PC-9 (cell line): ENCODE measurements at regions of chr6 and their contacts with region 1.

Region 1: GRCh38 chr6:123802697-123803496 is 768 bp upstream of the NKAIN2 start:
- DNase-seq: peak; percentile 75 to 85
- H3K4me3 ChIP-seq: peak overlapping the region; percentile 57
- H3K27ac ChIP-seq: no peak overlapping the region
- H3K4me1 ChIP-seq: 0 out of 2 replicates have a peak, but pooled peaks cover 11% of the 10 kb centered on the region
- H3K27me3 ChIP-seq: peaks cover 24% of the 10 kb centered on the region
- CTCF ChIP-seq: peak; percentile 96

Region 2: GRCh38 chr6:123415844-123416468 is 386.9 kb before region 1 on chr6:
- CTCF ChIA-PET with region 1: no interaction called
- POLR2A ChIA-PET with region 1: no interaction called
- intact Hi-C with region 1: loop called (anchors 10 kb)
- DNase-seq: peak; percentile 44 to 61
- H3K4me3 ChIP-seq: no peak overlapping the region
- H3K27ac ChIP-seq: no peak overlapping the region
- H3K4me1 ChIP-seq: no peaks in the 10 kb centered on the region
- H3K27me3 ChIP-seq: no peaks in the 10 kb centered on the region
- CTCF ChIP-seq: peak; percentile 92

Region 3: GRCh38 chr6:124310139-124310538 is 507.2 kb after region 1 on chr6:
- CTCF ChIA-PET with region 1: no interaction called
- POLR2A ChIA-PET with region 1: no interaction called
- intact Hi-C with region 1: no loop called
- DNase-seq: no peak
- H3K4me3 ChIP-seq: no peak overlapping the region
- H3K27ac ChIP-seq: no peak overlapping the region
- H3K4me1 ChIP-seq: no peaks in the 10 kb centered on the region
- H3K27me3 ChIP-seq: no peaks in the 10 kb centered on the region
- CTCF ChIP-seq: no peak

Region 4: DNA sequence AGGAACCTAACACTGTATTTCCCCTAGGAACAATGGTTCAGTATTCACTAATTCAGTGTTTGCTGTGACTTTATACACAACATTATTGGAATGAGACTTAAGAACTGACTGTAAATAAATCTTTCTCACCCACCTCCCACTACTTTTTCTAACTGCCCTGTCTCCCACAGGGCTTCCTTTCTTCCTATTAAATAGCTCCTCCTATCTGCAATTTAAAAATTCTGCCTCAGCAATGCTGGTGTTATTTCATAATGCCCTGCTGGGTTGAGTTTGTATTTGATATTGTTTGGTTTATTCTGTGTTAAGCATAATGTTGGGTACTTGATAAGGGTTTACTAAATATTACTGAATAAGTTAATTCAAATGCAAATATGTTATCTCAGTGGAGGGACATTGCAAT is 586.2 kb after region 1 on chr6:
- CTCF ChIA-PET with region 1: no interaction called
- POLR2A ChIA-PET with region 1: no interaction called
- intact Hi-C with region 1: loop called (anchors 10 kb)
- DNase-seq: no peak
- H3K4me3 ChIP-seq: no peak overlapping the region
- H3K27ac ChIP-seq: no peak overlapping the region
- H3K4me1 ChIP-seq: no peaks in the 10 kb centered on the region
- H3K27me3 ChIP-seq: no peaks in the 10 kb centered on the region
- CTCF ChIP-seq: 0 out of 2 replicates have a peak, but pooled peaks have one; percentile 28

Region 5: DNA sequence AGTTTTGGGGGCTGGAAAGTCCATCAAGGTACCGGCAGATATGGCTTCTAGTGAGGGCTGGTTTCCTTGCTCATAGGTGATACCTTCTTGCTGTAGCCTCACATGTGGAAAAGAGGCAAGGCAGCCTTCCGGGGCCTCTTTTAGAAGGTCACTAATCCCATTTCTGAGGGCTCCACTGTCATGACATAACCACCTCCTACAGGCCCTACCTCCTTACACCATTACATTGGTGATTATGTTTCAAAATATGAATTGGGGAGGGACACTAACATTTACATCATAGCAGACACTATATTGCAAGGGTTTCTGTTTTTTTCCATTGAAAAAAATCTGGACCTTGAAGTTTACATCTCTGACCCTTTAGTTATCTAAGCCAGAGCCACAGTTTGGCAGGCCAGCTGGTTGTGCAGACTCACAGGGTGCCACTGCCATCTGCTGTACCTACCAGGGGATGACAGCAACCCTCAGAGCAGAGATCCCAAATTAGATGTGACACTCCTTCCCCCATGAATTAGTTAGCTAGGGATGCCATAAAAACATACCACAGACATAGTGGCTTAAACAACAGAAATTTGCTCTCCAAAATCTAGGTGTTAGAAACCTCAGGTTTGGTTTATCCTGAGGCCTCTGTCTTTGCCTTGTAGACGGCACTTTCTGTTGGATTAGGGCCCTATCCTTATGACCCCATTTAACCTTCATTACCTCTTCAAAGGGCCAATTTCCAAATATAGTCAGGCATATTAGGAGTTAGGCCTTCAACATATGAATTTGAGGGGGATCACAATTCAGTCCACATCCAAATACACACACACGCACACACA is 993.0 kb after region 1 on chr6:
- CTCF ChIA-PET with region 1: interaction called, 4 read pairs
- POLR2A ChIA-PET with region 1: no interaction called
- intact Hi-C with region 1: loop called (anchors 1 kb)
- DNase-seq: peak in 1 of 2 experiments; percentile 10
- H3K4me3 ChIP-seq: no peak overlapping the region
- H3K27ac ChIP-seq: no peak overlapping the region
- H3K4me1 ChIP-seq: no peaks in the 10 kb centered on the region
- H3K27me3 ChIP-seq: no peaks in the 10 kb centered on the region
- CTCF ChIP-seq: peak; percentile 74

Region 6: GRCh38 chr6:124854338-124854922 is 1051.5 kb after region 1 on chr6:
- CTCF ChIA-PET with region 1: interaction called, 3 read pairs
- POLR2A ChIA-PET with region 1: no interaction called
- intact Hi-C with region 1: loop called (anchors 2 kb)
- DNase-seq: no peak
- H3K4me3 ChIP-seq: no peak overlapping the region
- H3K27ac ChIP-seq: no peak overlapping the region
- H3K4me1 ChIP-seq: no peaks in the 10 kb centered on the region
- H3K27me3 ChIP-seq: no peaks in the 10 kb centered on the region
- CTCF ChIP-seq: peak; percentile 76